AG04450 (cell line): ENCODE measurements at regions of chr14 and their contacts with region 1.

Region 1: GRCh38 chr14:80987235-80988032 is 32.0 kb downstream of the TSHR start:
- DNase-seq: peak; percentile 47
- H3K4me3 ChIP-seq: no peak overlapping the region
- H3K27ac ChIP-seq: no peak overlapping the region
- H3K27me3 ChIP-seq: peaks cover 2% of the 10 kb centered on the region
- CTCF ChIP-seq: peak; percentile 99

Region 2: DNA sequence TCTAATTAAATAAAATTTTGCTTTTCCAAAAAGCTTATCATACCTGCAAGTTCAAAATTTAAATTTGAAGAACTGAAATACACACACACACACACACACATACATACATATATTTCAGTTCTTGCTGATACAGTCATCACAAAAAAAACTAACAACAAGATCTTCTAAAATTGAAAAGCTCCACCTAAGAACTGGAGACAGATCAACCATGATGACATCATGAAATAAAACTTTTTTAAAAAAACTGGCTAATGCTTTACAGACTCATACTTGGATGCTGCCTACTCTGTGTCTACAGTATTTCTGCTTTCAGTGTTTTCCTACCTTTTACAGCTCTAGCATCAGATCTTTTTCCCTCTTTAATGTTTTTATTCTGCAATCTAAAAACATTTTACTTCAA is 1037.5 kb before region 1 on chr14:
- CTCF ChIA-PET with region 1: interaction called, 12 read pairs
- POLR2A ChIA-PET with region 1: no interaction called
- DNase-seq: no peak
- H3K4me3 ChIP-seq: no peak overlapping the region
- H3K27ac ChIP-seq: no peak overlapping the region
- H3K27me3 ChIP-seq: no peaks in the 10 kb centered on the region
- CTCF ChIP-seq: no peak

Region 3: GRCh38 chr14:80941241-80942182 is 45.9 kb before region 1 on chr14 and contains the start of gene CEP128:
- CTCF ChIA-PET with region 1: interaction called, 22 read pairs
- POLR2A ChIA-PET with region 1: no interaction called
- DNase-seq: peak; percentile 95
- H3K4me3 ChIP-seq: peak within 1 kb of the TSS; percentile 85
- H3K27ac ChIP-seq: no peak within 1 kb of the TSS
- H3K27me3 ChIP-seq: no peaks in the 10 kb centered on the region
- CTCF ChIP-seq: no peak
- polyA plus RNA-seq, gene CEP128: 1.0 and 1.8 TPM in 2 replicates

Region 4: GRCh38 chr14:80954687-80955299 is 32.6 kb before region 1 on chr14:
- CTCF ChIA-PET with region 1: interaction called, 122 read pairs
- POLR2A ChIA-PET with region 1: no interaction called
- DNase-seq: peak; percentile 42
- H3K4me3 ChIP-seq: peak overlapping the region; percentile 71
- H3K27ac ChIP-seq: no peak overlapping the region
- H3K27me3 ChIP-seq: peaks cover 8% of the 10 kb centered on the region
- CTCF ChIP-seq: peak; percentile 85

Region 5: GRCh38 chr14:80973931-80974641 is 13.3 kb before region 1 on chr14:
- CTCF ChIA-PET with region 1: interaction called, 60 read pairs
- POLR2A ChIA-PET with region 1: no interaction called
- DNase-seq: no peak
- H3K4me3 ChIP-seq: no peak overlapping the region
- H3K27ac ChIP-seq: no peak overlapping the region
- H3K27me3 ChIP-seq: peaks cover 4% of the 10 kb centered on the region
- CTCF ChIP-seq: no peak

Region 6: DNA sequence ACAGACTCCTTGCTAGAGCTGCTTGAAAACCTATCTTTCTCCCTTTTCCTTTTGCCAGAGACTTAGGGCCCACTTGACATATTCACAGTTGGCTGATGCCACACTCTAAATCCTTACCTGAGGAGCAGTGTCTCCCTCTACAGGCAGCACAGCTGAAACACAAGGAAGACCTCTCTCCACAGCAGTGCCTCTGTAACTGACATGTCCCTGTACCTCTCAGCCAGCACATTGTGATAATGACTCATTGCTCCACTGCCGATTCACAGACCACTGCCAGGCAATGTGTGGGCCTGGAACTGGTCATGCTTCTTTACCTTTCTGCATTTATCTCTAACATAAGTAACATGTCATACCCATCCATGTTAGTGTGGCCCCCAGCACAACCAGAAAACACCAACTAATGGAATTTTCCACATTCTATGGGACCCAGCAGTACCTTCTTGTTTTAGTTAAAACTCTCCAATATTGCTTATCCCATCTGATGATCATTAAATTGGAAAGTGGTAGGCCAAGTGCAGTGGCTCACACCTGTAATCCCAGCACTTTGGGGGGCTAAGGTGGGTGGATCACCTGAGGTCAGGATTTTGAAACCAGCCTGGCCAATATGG is 176.8 kb after region 1 on chr14:
- CTCF ChIA-PET with region 1: interaction called, 44 read pairs
- POLR2A ChIA-PET with region 1: no interaction called
- DNase-seq: peak; percentile 15
- H3K4me3 ChIP-seq: no peak overlapping the region
- H3K27ac ChIP-seq: no peak overlapping the region
- H3K27me3 ChIP-seq: no peaks in the 10 kb centered on the region
- CTCF ChIP-seq: peak; percentile 67

Region 7: GRCh38 chr14:81170104-81170828 is 182.8 kb after region 1 on chr14:
- CTCF ChIA-PET with region 1: interaction called, 44 read pairs
- POLR2A ChIA-PET with region 1: no interaction called
- DNase-seq: peak; percentile 67
- H3K4me3 ChIP-seq: peak overlapping the region; percentile 78
- H3K27ac ChIP-seq: peak overlapping the region; percentile 96
- H3K27me3 ChIP-seq: no peaks in the 10 kb centered on the region
- CTCF ChIP-seq: peak; percentile 95